Heart right ventricle (tissue), 16 donors: ENCODE measurements at regions of chr2 and their contacts with region 1.

Region 1: DNA sequence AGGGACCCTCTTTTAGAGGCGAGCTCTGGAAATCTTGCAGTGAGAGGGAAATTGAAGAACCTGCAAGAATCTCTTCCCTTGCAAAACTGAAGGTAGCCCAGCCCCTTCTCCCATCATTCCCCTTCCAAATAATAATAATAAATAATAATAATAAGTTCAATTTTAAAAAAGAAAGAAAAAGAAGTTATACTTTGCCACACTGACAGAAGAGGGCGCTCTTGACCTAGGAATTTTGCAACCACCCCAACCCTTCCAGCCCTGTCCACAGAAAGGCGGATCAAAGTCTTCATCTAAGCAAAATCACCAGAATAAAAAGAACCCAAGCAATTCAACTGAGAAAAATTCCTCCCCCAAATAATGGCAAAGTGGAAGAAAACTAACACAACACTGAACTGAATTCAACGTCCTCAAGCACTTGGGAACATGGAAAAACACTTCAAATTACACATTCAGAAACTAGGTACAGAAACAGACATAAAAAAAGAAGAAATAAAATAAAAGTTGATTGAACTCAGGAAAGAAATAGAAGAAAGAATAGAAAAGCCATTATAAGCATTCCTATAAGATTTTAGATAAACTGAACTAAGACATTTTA is 98.9 kb upstream of the GLS start:
- DNase-seq: peak in 1 of 2 donors; percentile 54
- ATAC-seq: peak in 5 of 8 donors; percentile 47 to 68 (median 56)
- H3K4me3 ChIP-seq: no peak overlapping the region
- H3K27ac ChIP-seq: no peak overlapping the region
- H3K4me1 ChIP-seq: peaks cover 0 to 4% (median 0%) of the 10 kb centered on the region in 9 donors
- H3K27me3 ChIP-seq: peaks cover 0 to 3% (median 0%) of the 10 kb centered on the region in 7 donors
- CTCF ChIP-seq: peak; percentile 37 to 77 (median 69)

Region 2: DNA sequence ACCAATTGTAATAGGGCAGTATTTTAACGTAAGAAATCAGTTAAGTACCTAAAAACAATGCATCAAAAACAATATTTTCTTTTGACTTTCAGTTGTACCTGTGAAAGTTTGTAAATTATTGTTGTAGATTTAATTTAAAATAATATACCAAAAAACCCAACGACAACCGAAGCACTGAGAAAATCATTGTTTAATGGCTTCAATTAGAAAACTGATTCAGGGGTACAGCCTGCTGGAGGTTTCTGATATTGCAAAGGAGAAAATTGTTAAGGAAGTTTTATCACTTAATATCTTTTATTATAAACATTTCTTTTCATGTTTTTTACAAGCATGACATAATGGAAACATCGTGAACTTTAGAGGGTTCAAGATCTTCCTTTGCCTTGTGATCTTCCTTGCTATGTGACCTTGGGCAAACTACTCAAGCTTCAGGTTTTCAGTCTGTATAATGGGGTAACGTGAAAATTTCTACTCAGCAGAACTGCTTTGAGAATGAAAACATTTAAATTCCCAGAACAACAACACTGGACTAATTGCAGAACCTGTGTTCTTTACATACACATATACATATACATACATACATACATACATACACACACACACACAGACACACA is 22.6 kb after region 1 on chr2:
- intact Hi-C with region 1: loop called in 3 of 10 experiments (anchors 1 to 2 kb)
- DNase-seq: no peak
- ATAC-seq: peak in 1 of 8 donors; percentile 38
- H3K4me3 ChIP-seq: no peak overlapping the region
- H3K27ac ChIP-seq: no peak overlapping the region
- H3K4me1 ChIP-seq: peaks cover 0 to 7% (median 0%) of the 10 kb centered on the region in 9 donors
- H3K27me3 ChIP-seq: no peaks in the 10 kb centered on the region
- CTCF ChIP-seq: peak; percentile 35 to 82 (median 69)

Region 3: DNA sequence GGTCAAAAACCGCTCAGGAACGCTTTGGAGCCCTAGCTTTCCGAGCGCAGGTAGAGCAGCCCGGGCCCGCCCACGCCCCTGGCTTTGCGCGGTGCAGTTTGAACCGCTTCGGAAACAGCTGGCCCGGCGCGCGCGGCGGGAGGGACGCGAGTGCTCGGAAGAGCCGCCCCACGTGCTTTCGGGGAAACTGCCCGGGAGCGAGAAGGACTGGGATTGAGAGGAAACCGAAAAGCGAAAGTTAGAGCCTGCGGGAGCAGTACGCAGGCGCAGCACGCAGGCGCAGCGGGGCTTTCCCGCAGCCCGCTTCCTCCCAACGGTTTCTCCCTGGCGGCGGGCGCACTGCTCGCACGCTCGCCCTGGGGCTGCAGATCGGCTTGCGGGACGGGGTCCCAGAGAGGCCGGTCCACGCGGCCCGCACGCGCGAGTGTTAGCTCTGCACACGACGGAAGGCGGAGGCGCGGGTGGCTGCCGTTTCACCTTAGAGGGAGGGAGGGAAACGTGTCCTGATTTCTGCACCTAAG is 238.6 kb after region 1 on chr2:
- intact Hi-C with region 1: loop called in 3 of 10 experiments (anchors 5 kb)
- DNase-seq: peak; percentile 93 to 95
- ATAC-seq: peak; percentile 99 to 100 (median 99)
- H3K4me3 ChIP-seq: peak overlapping the region; percentile 41 to 77 (median 68)
- H3K27ac ChIP-seq: peak overlapping the region; percentile 68 to 97 (median 89)
- H3K4me1 ChIP-seq: peaks cover 0 to 66% (median 10%) of the 10 kb centered on the region in 9 donors
- H3K27me3 ChIP-seq: no peaks in the 10 kb centered on the region
- CTCF ChIP-seq: peak in 3 of 9 donors; percentile 27 to 37 (median 31)

Region 4: GRCh38 chr2:191150600-191151330 is 369.1 kb after region 1 on chr2 and contains the start of gene STAT4:
- intact Hi-C with region 1: loop called in 1 of 10 experiments (anchors 10 kb)
- DNase-seq: peak; percentile 19 to 29
- ATAC-seq: peak in 7 of 8 donors; percentile 57 to 86 (median 80)
- H3K4me3 ChIP-seq: peak within 1 kb of the TSS; percentile 37 to 66 (median 53)
- H3K27ac ChIP-seq: peak within 1 kb of the TSS in 4 of 10 donors; percentile 2 to 84 (median 59)
- H3K4me1 ChIP-seq: peaks cover 0 to 24% (median 4%) of the 10 kb centered on the region in 9 donors
- H3K27me3 ChIP-seq: no peaks in the 10 kb centered on the region
- CTCF ChIP-seq: no peak
- total RNA-seq, gene STAT4: 0.52 to 9.4 (median 2.2) TPM